Endothelial cell of umbilical vein (primary cell): ENCODE measurements at regions of chr16 and their contacts with region 1.

Region 1: DNA sequence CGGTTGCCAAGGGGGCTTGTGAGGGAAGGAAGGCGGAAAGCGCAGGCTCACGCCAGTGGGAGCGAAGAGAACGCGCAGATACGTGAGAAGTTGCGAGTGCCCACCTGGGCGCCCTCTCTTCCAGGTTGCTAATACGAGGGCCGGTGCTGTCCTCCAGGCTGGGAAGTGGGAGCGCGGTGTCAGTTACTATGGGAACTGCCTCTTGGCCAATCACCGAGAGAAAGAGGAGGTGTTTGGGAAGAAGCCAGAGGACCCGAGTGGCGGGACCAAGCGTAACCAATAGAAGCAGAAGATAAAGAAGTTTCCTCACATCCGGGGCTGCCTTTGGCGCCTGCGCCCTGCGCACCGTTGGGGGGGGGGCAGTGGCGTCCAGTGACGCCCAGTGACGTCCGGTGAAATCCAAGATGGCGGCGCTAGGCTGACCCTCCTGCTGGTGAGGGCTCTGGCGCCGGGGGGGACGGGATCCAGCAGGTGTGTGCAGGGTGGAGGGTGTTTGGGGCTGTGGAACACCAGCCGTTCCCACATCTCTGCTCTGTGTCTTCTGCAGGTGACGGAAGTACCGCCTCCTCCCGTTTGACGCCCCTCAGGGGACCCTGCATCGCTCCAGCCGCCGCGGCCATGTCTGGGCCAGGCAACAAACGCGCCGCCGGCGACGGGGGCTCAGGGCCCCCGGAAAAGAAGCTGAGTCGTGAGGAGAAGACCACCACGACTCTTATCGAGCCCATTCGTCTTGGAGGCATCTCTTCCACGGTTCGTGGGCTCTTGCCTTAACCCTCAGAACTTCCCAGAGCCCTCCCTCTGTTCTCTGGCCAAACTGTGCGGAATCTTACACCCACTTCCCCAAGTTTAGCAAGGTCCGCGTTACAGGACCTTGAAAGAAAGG is at the starts of genes CFAP119 and RNF40:
- DNase-seq: peak; percentile 99
- H3K4me3 ChIP-seq: peak within 1 kb of the TSS; percentile 19 to 87 (median 75)
- H3K27ac ChIP-seq: peak within 1 kb of the TSS; percentile 47
- H3K4me1 ChIP-seq: peaks cover 15% of the 10 kb centered on the region
- H3K27me3 ChIP-seq: no peaks in the 10 kb centered on the region
- CTCF ChIP-seq: no peak
- POLR2A ChIP-seq: peak; percentile 89
- total RNA-seq, gene CFAP119: 6.5 and 7.2 TPM in 2 replicates
- total RNA-seq, gene RNF40: 97.0 and 102 TPM in 2 replicates

Region 2: DNA sequence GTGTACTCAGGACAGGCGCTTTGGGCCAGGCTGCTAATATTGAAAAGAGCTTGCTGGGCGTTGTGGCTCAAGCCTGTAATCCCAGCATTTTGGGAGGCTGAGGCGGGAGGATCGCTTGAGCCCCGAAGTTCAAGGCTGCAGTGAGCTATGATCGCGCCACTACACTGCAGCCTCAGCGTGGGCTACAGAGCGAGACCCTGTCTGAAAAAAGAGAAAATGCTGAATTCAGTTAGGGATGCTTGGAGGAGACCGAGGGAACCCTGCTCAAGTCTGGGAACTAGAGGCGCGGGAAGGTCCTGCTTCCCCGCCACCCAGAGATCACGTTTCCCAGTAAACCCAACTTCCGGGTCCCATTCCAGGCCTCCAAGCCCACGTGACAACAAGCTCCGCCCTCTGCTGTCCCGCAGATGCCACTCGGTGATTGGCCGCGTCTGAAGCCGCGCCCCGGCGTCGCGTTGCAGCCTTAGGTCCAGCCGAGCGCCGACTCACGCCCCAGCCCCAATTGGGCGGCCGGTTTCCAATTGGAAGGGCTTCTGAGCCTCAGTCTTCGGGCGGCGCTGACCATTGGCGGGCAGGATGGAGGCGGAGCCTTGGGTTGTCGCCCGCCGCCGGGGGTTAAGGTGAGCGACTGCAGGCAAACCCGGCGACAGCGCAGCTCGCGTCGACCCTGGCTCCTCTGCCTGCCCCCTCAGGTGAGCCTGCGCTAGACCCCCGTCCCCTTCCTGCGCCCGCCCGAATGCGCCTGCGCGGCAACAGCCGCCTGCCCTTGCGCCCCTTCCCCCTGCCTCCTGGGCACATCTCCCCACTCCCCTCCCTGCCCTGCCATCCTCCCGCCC is 14.2 kb before region 1 on chr16 and contains the start of gene PHKG2:
- CTCF ChIA-PET with region 1: interaction called, 4 read pairs
- POLR2A ChIA-PET with region 1: no interaction called
- dilution Hi-C with region 1: no loop called
- intact Hi-C with region 1: loop called (anchors 1 kb)
- DNase-seq: peak; percentile 99
- H3K4me3 ChIP-seq: peak within 1 kb of the TSS; percentile 14 to 86 (median 49)
- H3K27ac ChIP-seq: peak within 1 kb of the TSS; percentile 47
- H3K4me1 ChIP-seq: peaks cover 7% of the 10 kb centered on the region
- H3K27me3 ChIP-seq: no peaks in the 10 kb centered on the region
- CTCF ChIP-seq: no peak
- POLR2A ChIP-seq: peak; percentile 92
- total RNA-seq, gene PHKG2: 33.0 and 34.1 TPM in 2 replicates

Region 3: GRCh38 chr16:30775392-30776188 is 13.4 kb after region 1 on chr16:
- CTCF ChIA-PET with region 1: interaction called, 3 read pairs
- POLR2A ChIA-PET with region 1: no interaction called
- dilution Hi-C with region 1: no loop called
- intact Hi-C with region 1: loop called (anchors 1 kb)
- DNase-seq: peak; percentile 77
- H3K4me3 ChIP-seq: peak overlapping the region; percentile 20 to 62 (median 56)
- H3K27ac ChIP-seq: peak overlapping the region; percentile 26
- H3K4me1 ChIP-seq: peaks cover 8% of the 10 kb centered on the region
- H3K27me3 ChIP-seq: no peaks in the 10 kb centered on the region
- CTCF ChIP-seq: no peak
- POLR2A ChIP-seq: peak; percentile 88